Activated naive CD4-positive, alpha-beta T cell treated with anti-CD3 and anti-CD28 coated beads for 36 hours (primary cell): ENCODE measurements at regions of chr9 and their contacts with region 1.

Region 1: DNA sequence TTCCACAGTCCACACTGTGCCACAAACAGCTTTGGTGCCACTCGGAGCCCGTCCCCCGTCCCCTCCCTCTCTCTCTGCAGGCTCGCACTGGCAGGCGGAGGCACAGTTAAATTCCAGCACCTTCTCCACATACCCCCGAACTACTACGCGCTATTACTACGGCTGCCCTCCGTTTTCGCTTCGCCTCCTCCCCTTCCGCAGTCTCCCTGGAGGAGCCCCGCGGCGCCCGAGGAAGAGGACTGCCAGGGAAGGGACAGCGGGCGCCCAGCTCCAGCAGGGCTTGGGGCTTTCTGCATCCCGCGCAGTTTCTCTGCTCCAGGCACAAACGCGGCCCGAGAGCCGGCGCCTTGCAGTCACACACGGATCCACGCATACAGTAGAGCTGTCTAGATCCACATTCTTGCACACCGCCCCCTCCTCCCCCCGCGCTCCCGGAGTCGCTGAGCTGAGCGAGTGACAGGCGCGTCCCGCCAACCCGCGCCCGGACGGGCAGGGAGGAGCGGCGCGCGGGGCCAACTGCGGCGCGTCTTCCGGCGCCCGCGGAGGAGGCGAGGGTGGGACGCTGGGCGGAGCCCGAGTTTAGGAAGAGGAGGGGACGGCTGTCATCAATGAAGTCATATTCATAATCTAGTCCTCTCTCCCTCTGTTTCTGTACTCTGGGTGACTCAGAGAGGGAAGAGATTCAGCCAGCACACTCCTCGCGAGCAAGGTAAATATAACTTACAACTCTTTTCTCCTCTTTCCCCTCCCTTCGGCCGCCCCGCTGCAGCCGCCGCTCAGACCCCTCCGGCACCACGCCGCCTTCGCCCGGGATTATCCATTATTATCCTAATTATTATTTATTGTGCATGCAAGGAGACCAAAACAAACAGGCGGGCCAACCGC is at the start of gene SMARCA2:
- DNase-seq: peak; percentile 97
- H3K4me3 Mint-ChIP-seq: peak within 1 kb of the TSS; percentile 92
- H3K27ac Mint-ChIP-seq: peak within 1 kb of the TSS; percentile 99
- H3K4me1 Mint-ChIP-seq: peaks cover 44% of the 10 kb centered on the region
- H3K27me3 Mint-ChIP-seq: no peaks in the 10 kb centered on the region
- total RNA-seq, gene SMARCA2: 87.8 to 89.9 TPM

Region 2: GRCh38 chr9:2053883-2054845 is 39.2 kb after region 1 on chr9:
- CTCF ChIA-PET with region 1: no interaction called
- intact Hi-C with region 1: loop called (anchors 1 kb)
- DNase-seq: peak; percentile 89
- H3K4me3 Mint-ChIP-seq: peak overlapping the region; percentile 5
- H3K27ac Mint-ChIP-seq: peak overlapping the region; percentile 83
- H3K4me1 Mint-ChIP-seq: peaks cover 53% of the 10 kb centered on the region
- H3K27me3 Mint-ChIP-seq: no peaks in the 10 kb centered on the region

Region 3: GRCh38 chr9:2107906-2108451 is 93.0 kb after region 1 on chr9:
- CTCF ChIA-PET with region 1: no interaction called
- intact Hi-C with region 1: loop called (anchors 2 kb)
- DNase-seq: no peak
- H3K4me3 Mint-ChIP-seq: no peak overlapping the region
- H3K27ac Mint-ChIP-seq: peak overlapping the region; percentile 8
- H3K4me1 Mint-ChIP-seq: peaks cover 18% of the 10 kb centered on the region
- H3K27me3 Mint-ChIP-seq: no peaks in the 10 kb centered on the region

Region 4: GRCh38 chr9:2158111-2158610 is 143.2 kb after region 1 on chr9:
- CTCF ChIA-PET with region 1: no interaction called
- intact Hi-C with region 1: loop called (anchors 1 kb)
- DNase-seq: peak; percentile 66
- H3K4me3 Mint-ChIP-seq: peak overlapping the region; percentile 80
- H3K27ac Mint-ChIP-seq: peak overlapping the region; percentile 94
- H3K4me1 Mint-ChIP-seq: peaks cover 58% of the 10 kb centered on the region
- H3K27me3 Mint-ChIP-seq: no peaks in the 10 kb centered on the region

Region 5: DNA sequence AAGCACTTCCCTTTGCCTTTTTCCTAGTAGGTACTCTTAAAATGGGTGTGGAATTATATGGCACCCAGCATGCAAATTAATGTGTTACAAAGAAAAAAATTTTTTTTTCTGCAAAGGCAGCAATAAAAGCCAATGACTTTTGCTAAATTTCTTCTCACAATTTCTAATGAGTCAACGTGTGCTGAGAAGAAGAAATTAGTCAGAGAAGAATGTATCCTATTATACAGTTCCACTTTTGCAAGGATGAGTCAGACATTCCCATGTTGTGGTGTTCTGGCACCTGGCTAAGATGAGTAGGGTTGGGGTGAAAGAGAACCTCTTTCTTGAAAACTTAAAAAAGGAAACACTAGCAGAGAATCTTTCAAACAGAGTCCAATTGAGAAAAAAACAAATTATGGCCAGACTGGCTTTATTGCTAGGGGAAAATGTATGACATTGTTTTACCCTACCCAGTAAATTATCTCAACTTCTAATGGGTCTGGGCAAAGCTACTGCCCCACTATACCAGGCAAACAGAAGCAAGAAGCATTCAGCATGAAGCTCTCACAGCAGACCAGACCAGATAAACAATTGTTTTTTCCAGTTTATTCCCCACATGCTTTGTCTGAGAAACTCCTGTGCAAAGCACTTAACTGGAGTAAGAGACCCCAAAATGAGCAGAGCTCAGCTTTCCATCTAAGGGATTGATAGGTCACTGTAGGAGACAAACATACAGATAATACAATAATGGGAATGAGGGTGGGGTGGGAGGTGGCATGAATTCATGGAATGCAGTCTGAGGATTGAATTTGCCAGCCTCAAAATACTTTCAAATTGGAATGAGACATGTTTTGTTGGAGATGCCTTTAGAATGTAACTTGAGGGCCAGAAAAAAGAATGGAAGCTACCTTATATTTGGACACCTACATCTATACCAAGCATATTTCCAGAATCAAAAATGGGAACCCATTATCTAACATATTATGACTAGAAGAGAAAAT is 1731.6 kb after region 1 on chr9:
- CTCF ChIA-PET with region 1: no interaction called
- intact Hi-C with region 1: loop called (anchors 10 kb)
- DNase-seq: peak; percentile 79
- H3K4me3 Mint-ChIP-seq: no peak overlapping the region
- H3K27ac Mint-ChIP-seq: peak overlapping the region; percentile 71
- H3K4me1 Mint-ChIP-seq: peaks cover 46% of the 10 kb centered on the region
- H3K27me3 Mint-ChIP-seq: peaks cover 5% of the 10 kb centered on the region